GM13976 (cell line): ENCODE measurements at regions of chr15 and their contacts with region 1.

Region 1: GRCh38 chr15:75201609-75202250 is at the start of gene C15orf39:
- DNase-seq: peak; percentile 93
- CTCF ChIP-seq: peak; percentile 87

Region 2: DNA sequence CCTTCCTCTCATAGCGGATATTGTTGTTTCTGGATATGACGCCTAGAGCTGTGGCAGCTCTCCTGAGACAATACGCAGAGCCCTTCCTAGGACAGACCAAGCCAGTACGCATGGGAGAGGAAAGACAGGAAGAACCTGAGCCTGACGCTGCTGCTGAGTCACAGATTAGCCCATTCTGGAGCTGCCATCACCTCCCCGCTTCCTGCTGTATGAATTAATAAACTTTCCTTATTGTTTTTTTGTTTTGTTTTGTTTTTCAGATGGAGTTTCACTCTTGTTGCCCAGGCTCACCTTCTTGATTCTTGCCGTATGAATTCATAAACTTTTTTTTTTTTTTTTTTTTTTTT is 111.4 kb before region 1 on chr15:
- in situ Hi-C with region 1: loop called (anchors 10 kb)
- DNase-seq: no peak
- CTCF ChIP-seq: no peak

Region 3: GRCh38 chr15:75130597-75131268 is 71.0 kb before region 1 on chr15:
- in situ Hi-C with region 1: loop called (anchors 5 kb)
- DNase-seq: peak; percentile 59
- CTCF ChIP-seq: no peak

Region 4: DNA sequence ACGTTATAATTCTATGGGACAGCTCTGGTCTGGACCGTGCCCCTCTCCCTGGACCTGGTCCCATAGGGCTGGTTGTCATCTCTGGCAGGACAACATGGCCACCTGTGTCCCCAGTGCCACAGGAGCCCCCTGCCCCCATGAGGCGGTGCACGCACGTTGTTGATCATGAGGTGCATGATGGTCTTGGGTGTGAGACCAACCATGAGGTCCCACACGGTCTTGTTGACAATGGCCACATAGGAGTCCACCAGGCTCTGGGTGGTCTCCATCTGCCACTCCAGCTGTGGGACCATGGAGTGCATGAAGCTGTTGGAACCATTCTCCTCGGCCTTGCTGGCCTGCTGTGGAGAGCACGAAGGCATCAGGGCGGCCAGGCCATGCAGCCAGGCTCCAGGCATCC is 100.6 kb after region 1 on chr15:
- in situ Hi-C with region 1: no loop called
- DNase-seq: no peak
- CTCF ChIP-seq: no peak